SK-N-SH (cell line): ENCODE measurements at regions of chr1 and their contacts with region 1.

Region 1: GRCh38 chr1:210584439-210585113 is 255.9 kb downstream of the HHAT start:
- DNase-seq: peak; percentile 75
- H3K4me3 ChIP-seq: no peak overlapping the region
- H3K27ac ChIP-seq: peak overlapping the region in 1 of 2 experiments; percentile 95; a peak in 2 of 4 replicates
- H3K4me1 ChIP-seq: peaks cover 0 to 16% of the 10 kb centered on the region in 2 experiments; a peak in 2 of 4 replicates
- H3K27me3 ChIP-seq: no peaks in the 10 kb centered on the region
- CTCF ChIP-seq: peak; percentile 88
- EP300 ChIP-seq: peak in 1 of 2 experiments; percentile 90; a peak in 2 of 4 replicates
- RAD21 ChIP-seq: peak; percentile 98

Region 2: GRCh38 chr1:210536254-210536961 is 48.2 kb before region 1 on chr1:
- CTCF ChIA-PET with region 1: interaction called, 10 read pairs
- POLR2A ChIA-PET with region 1: no interaction called
- DNase-seq: peak; percentile 48
- H3K4me3 ChIP-seq: no peak overlapping the region; a peak in 1 of 4 replicates
- H3K27ac ChIP-seq: peak overlapping the region in 1 of 2 experiments; percentile 86; a peak in 2 of 4 replicates
- H3K4me1 ChIP-seq: peaks cover 0 to 48% of the 10 kb centered on the region in 2 experiments; a peak in 2 of 4 replicates
- H3K27me3 ChIP-seq: no peaks in the 10 kb centered on the region
- CTCF ChIP-seq: no peak
- EP300 ChIP-seq: peak in 1 of 2 experiments; percentile 76; a peak in 2 of 4 replicates
- RAD21 ChIP-seq: no peak; the same call in 1 of the 2 replicates

Region 3: DNA sequence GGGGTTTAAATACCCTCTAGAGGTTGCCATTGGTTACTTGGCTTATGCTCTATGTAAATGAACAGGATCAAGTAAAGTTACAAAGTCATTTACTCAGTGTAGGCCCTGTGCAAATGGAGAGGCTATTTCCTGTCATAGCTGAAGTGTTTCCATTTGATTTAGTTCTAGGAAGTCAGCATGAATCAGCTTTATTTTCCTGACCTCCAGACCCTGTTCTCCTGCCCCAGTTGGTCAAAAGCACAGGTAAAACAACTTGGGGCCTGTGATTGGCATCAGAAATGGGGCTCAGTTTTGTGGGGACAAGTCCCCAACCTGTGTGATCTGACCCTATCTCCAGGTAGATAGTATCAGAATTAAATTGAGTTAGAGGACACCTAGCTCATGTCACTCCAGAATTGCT is 15.9 kb before region 1 on chr1:
- CTCF ChIA-PET with region 1: interaction called, 34 read pairs
- POLR2A ChIA-PET with region 1: interaction called, 5 read pairs
- DNase-seq: no peak
- H3K4me3 ChIP-seq: no peak overlapping the region
- H3K27ac ChIP-seq: no peak overlapping the region
- H3K4me1 ChIP-seq: peaks cover 0 to 37% of the 10 kb centered on the region in 2 experiments; a peak in 2 of 4 replicates
- H3K27me3 ChIP-seq: no peaks in the 10 kb centered on the region
- CTCF ChIP-seq: no peak
- EP300 ChIP-seq: no peak
- RAD21 ChIP-seq: no peak

Region 4: DNA sequence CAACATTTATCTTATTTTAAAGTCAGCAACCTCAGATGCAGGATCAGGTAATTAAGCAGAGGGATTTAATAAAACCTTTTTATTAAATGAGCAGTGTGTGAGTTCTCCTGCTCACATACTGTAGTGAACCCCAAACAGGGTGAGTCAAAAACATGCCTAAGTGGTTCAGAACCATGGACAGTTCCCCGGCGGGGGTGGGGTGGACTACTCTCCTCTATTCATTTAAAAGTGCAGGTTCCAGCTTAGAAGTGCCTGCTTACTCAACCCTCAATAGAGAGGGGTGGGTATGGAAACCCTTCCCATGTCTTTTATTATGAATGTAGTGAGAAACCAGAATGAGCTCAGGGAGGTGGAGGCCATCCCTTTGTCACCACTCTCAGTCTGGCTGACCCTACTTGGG is 142.0 kb after region 1 on chr1:
- CTCF ChIA-PET with region 1: interaction called, 12 read pairs
- POLR2A ChIA-PET with region 1: interaction called, 3 read pairs
- DNase-seq: no peak
- H3K4me3 ChIP-seq: no peak overlapping the region
- H3K27ac ChIP-seq: no peak overlapping the region
- H3K4me1 ChIP-seq: peaks cover 0 to 31% of the 10 kb centered on the region in 2 experiments; a peak in 2 of 4 replicates
- H3K27me3 ChIP-seq: no peaks in the 10 kb centered on the region
- CTCF ChIP-seq: no peak
- EP300 ChIP-seq: no peak
- RAD21 ChIP-seq: no peak